ENCODE measurements at regions of chr15 and their contacts with region 1.

Region 1: GRCh38 chr15:60326824-60327654 is 70.7 kb downstream of the ANXA2 start:
- DNase-seq: peak; percentile 52
- ATAC-seq: no peak
- H3K4me3 Mint-ChIP-seq: no peak overlapping the region
- H3K27ac Mint-ChIP-seq: no peak overlapping the region
- H3K4me1 Mint-ChIP-seq: peaks cover 2% of the 10 kb centered on the region
- H3K27me3 Mint-ChIP-seq: peaks cover 31% of the 10 kb centered on the region

Region 2: DNA sequence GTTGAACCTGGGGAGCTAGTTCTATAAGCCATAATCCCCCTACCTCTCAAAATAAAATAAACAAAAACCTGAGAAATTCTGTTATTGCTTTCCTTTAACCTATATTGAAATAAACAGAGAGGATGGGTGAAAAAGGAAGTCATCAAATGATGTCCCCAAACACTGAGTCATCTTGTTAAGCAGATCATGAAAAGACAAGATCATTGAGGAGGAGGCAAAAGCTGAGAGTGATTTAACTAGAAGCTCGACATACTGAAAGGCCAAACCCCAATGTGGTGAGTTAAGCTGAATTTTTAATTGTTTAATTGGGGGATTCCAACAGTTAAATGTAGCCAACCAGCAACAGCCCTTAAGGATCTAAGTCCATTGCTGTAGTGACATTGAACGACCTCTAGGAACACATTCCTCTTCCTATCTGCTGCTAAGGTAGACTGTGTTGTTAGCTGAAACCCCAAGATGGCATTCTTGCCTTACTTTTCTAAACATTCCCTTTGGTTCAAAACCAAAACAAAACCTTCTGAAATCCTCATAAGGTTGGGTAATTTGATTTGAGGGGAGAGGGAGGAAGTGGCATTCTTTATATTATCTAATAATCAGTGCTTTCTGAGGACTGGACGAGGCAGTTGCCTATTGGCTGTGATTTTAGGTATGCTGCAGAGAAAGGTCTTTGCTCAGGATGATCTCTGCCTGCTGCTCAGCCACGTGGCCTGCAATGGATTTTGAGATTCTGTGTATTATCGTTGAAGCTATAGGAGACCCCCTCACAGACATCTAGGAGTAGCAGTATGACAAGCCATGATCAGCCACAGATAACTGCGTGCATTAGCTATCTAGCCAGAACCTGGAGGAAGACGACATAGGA is 575.3 kb before region 1 on chr15:
- CTCF ChIA-PET with region 1: interaction called, 12 read pairs
- POLR2A ChIA-PET with region 1: no interaction called
- intact Hi-C with region 1: loop called in 1 of 2 experiments (anchors 5 kb)
- DNase-seq: no peak
- ATAC-seq: peak; percentile 74
- H3K4me3 Mint-ChIP-seq: no peak overlapping the region
- H3K27ac Mint-ChIP-seq: no peak overlapping the region
- H3K4me1 Mint-ChIP-seq: peaks cover 5% of the 10 kb centered on the region
- H3K27me3 Mint-ChIP-seq: peaks cover 4% of the 10 kb centered on the region

Region 3: GRCh38 chr15:59997070-59997701 is 329.9 kb before region 1 on chr15:
- CTCF ChIA-PET with region 1: interaction called, 3 read pairs
- POLR2A ChIA-PET with region 1: no interaction called
- intact Hi-C with region 1: loop called (anchors 1 to 5 kb)
- DNase-seq: peak; percentile 84
- ATAC-seq: peak; percentile 88
- H3K4me3 Mint-ChIP-seq: peak overlapping the region; percentile 59
- H3K27ac Mint-ChIP-seq: no peak overlapping the region
- H3K4me1 Mint-ChIP-seq: peaks cover 48% of the 10 kb centered on the region
- H3K27me3 Mint-ChIP-seq: peaks cover 86% of the 10 kb centered on the region

Region 4: GRCh38 chr15:60315878-60316277 is 11.2 kb before region 1 on chr15:
- CTCF ChIA-PET with region 1: interaction called, 12 read pairs
- POLR2A ChIA-PET with region 1: no interaction called
- intact Hi-C with region 1: no loop called
- DNase-seq: peak; percentile 51
- ATAC-seq: peak; percentile 58
- H3K4me3 Mint-ChIP-seq: no peak overlapping the region
- H3K27ac Mint-ChIP-seq: no peak overlapping the region
- H3K4me1 Mint-ChIP-seq: peaks cover 4% of the 10 kb centered on the region
- H3K27me3 Mint-ChIP-seq: peaks cover 8% of the 10 kb centered on the region

Region 5: DNA sequence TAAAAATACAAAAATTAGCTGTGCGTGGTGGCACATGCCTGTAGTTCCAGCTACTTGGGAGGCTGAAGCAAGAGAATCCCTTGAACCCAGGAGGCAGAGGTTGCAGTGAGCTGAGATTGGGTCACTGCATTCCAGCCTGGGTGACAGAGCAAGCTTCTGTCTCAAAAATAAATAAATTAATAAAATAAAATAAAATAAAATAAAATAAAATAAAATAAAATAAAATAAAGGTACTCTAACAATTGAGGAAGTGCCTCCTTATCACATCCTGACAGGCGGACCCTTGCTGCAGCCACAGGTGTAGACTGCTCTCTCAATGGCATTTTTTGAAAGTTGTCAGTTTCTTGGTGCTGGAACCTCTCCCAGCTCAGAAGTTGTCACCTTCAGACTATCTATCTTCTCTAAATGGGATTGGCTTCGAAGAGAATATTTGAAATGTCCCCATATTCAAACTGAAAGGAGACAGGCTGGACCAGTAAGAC is 597.9 kb after region 1 on chr15:
- CTCF ChIA-PET with region 1: no interaction called
- POLR2A ChIA-PET with region 1: no interaction called
- intact Hi-C with region 1: no loop called
- DNase-seq: no peak
- ATAC-seq: no peak
- H3K4me3 Mint-ChIP-seq: no peak overlapping the region
- H3K27ac Mint-ChIP-seq: no peak overlapping the region
- H3K4me1 Mint-ChIP-seq: no peaks in the 10 kb centered on the region
- H3K27me3 Mint-ChIP-seq: peaks cover 6% of the 10 kb centered on the region

Measured in activated CD4-positive, alpha-beta T cell treated with anti-CD3 and anti-CD28 coated beads for 36 hours (primary cell).